CD4-positive, alpha-beta T cell (primary cell): ENCODE measurements at regions of chr12 and their contacts with region 1.

Region 1: GRCh38 chr12:19110221-19110940 is 19.2 kb upstream of the PLEKHA5 start:
- DNase-seq: no peak
- ATAC-seq: no peak
- H3K4me3 ChIP-seq: no peak overlapping the region
- H3K4me3 Mint-ChIP-seq: no peak overlapping the region
- H3K27ac ChIP-seq: no peak overlapping the region
- H3K27ac Mint-ChIP-seq: no peak overlapping the region
- H3K4me1 ChIP-seq: no peaks in the 10 kb centered on the region
- H3K4me1 Mint-ChIP-seq: no peaks in the 10 kb centered on the region
- H3K27me3 ChIP-seq: no peaks in the 10 kb centered on the region
- H3K27me3 Mint-ChIP-seq: no peaks in the 10 kb centered on the region
- CTCF ChIP-seq: no peak

Region 2: GRCh38 chr12:19048943-19049342 is 61.4 kb before region 1 on chr12:
- CTCF ChIA-PET with region 1: no interaction called
- POLR2A ChIA-PET with region 1: no interaction called
- intact Hi-C with region 1: loop called in 1 of 2 experiments (anchors 10 kb)
- DNase-seq: peak in 2 of 14 experiments; percentile 5 to 16
- ATAC-seq: no peak
- H3K4me3 ChIP-seq: no peak overlapping the region
- H3K4me3 Mint-ChIP-seq: no peak overlapping the region
- H3K27ac ChIP-seq: no peak overlapping the region
- H3K27ac Mint-ChIP-seq: no peak overlapping the region
- H3K4me1 ChIP-seq: no peaks in the 10 kb centered on the region
- H3K4me1 Mint-ChIP-seq: no peaks in the 10 kb centered on the region
- H3K27me3 ChIP-seq: peaks cover 0 to 4% of the 10 kb centered on the region in 2 experiments
- H3K27me3 Mint-ChIP-seq: peaks cover 9% of the 10 kb centered on the region
- CTCF ChIP-seq: no peak

Region 3: DNA sequence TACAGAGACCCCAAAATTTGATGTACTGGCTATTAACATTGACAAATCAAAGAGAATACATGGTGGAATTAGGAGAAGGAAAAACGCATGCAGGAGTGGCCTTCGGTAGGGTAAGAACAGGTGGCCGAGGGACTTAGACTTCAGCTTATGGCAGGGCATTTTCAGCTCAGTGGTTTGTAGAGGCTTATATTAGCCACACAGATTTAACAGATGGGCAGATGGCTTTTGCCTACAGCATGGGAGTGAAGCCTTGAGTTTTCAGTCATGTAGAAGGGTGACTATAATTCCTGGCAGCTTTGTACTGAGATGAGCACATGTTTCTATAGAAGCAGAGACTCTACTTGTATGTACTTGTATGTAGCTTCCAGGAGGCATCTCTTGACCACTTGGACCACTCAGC is 21.8 kb before region 1 on chr12:
- CTCF ChIA-PET with region 1: no interaction called
- POLR2A ChIA-PET with region 1: no interaction called
- intact Hi-C with region 1: no loop called
- DNase-seq: no peak
- ATAC-seq: no peak
- H3K4me3 ChIP-seq: no peak overlapping the region
- H3K4me3 Mint-ChIP-seq: no peak overlapping the region
- H3K27ac ChIP-seq: no peak overlapping the region
- H3K27ac Mint-ChIP-seq: no peak overlapping the region
- H3K4me1 ChIP-seq: no peaks in the 10 kb centered on the region
- H3K4me1 Mint-ChIP-seq: no peaks in the 10 kb centered on the region
- H3K27me3 ChIP-seq: no peaks in the 10 kb centered on the region
- H3K27me3 Mint-ChIP-seq: no peaks in the 10 kb centered on the region
- CTCF ChIP-seq: no peak

Region 4: DNA sequence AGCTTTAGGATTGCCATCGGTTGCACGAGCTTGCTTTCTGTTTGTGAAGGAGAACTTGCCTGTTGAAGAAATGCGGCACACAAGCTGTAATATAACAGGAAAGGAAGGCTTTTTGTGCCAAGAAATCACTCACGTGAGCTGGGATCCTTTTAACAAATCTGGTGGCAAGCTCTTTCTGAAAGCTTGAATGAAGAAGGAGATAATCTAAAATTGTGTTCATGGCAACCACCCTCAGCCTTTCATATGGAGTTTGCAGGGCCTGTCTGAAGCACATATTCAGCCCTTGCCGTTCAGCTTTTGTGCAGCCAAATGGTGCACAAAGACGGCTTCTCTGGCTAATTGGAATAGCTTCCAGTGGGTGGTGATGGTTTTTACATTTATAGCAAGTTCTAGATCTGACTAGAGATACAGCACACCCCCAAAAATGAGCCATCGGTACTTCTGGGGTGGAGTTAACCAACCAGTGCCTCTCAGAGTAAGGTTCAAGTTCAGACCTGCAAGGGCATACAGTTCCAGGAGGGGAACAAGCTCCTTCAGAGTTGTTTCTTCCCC is 436.3 kb after region 1 on chr12:
- CTCF ChIA-PET with region 1: no interaction called
- POLR2A ChIA-PET with region 1: no interaction called
- intact Hi-C with region 1: loop called in 1 of 2 experiments (anchors 5 kb)
- DNase-seq: no peak
- ATAC-seq: no peak
- H3K4me3 ChIP-seq: no peak overlapping the region
- H3K4me3 Mint-ChIP-seq: no peak overlapping the region
- H3K27ac ChIP-seq: no peak overlapping the region
- H3K27ac Mint-ChIP-seq: no peak overlapping the region
- H3K4me1 ChIP-seq: no peaks in the 10 kb centered on the region
- H3K4me1 Mint-ChIP-seq: peaks cover 4% of the 10 kb centered on the region
- H3K27me3 ChIP-seq: no peaks in the 10 kb centered on the region
- H3K27me3 Mint-ChIP-seq: no peaks in the 10 kb centered on the region
- CTCF ChIP-seq: no peak